Sigmoid colon (tissue), 7 donors: ENCODE measurements at regions of chr17 and their contacts with region 1.

Region 1: DNA sequence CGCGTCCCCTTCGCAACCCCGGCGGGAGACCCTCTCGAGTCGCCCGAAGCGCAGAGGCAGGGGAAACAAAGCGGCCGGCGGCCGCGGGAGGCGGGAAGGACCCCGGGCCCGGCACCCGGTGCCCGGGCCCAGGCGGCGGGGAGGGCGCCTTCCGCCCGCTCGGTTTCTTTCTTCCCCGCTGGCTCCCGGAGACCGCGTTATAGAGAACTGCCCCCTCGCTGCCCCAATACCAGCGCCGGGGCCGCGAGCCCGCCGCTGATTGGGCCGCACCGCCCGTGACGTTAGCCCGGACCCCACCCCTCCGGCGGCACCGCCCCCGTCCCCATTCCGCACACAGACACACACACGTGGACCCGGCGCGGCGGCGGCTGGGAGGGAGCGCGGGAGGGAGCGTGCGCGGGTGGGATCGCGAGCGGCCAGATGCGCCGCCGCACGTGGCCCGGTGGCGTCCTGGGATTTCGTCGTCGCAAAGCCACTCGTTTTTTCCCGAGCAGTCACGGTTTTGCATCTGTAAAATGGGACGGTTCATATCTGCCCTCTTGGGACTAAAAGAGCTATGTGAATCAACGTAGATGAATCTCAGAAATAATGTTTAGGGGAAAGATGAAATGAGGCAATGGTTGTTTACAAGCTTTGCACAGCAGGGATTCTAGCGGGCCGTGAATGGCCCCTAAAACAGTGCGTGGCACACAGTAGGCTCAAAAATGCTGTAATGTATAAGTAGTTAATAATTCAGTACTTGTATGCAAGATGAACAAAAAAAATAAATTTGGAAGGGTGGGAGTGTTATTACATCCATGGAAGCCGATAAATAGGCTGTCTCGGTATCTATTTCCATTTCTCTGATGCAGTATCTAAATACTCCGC is at the start of gene EPOP:
- DNase-seq: peak; percentile 91
- H3K4me3 ChIP-seq: peak within 1 kb of the TSS; percentile 24 to 63 (median 51)
- H3K27ac ChIP-seq: peak within 1 kb of the TSS in 3 of 4 donors; percentile 27 to 59 (median 58)
- H3K4me1 ChIP-seq: peaks cover 0 to 37% (median 34%) of the 10 kb centered on the region in 4 donors
- H3K27me3 ChIP-seq: peaks cover 25 to 63% (median 59%) of the 10 kb centered on the region in 3 donors
- CTCF ChIP-seq: no peak
- EP300 ChIP-seq: no peak
- POLR2A ChIP-seq: no peak
- total RNA-seq, gene EPOP: 0.36 to 2.8 (median 1.3) TPM

Region 2: GRCh38 chr17:38560508-38561318 is 114.3 kb before region 1 on chr17:
- intact Hi-C with region 1: no loop called
- DNase-seq: no peak
- H3K4me3 ChIP-seq: no peak overlapping the region
- H3K27ac ChIP-seq: no peak overlapping the region
- H3K4me1 ChIP-seq: peaks cover 0 to 31% (median 24%) of the 10 kb centered on the region in 4 donors
- H3K27me3 ChIP-seq: peaks cover 23 to 60% (median 41%) of the 10 kb centered on the region in 3 donors
- CTCF ChIP-seq: no peak
- EP300 ChIP-seq: no peak
- POLR2A ChIP-seq: no peak

Region 3: DNA sequence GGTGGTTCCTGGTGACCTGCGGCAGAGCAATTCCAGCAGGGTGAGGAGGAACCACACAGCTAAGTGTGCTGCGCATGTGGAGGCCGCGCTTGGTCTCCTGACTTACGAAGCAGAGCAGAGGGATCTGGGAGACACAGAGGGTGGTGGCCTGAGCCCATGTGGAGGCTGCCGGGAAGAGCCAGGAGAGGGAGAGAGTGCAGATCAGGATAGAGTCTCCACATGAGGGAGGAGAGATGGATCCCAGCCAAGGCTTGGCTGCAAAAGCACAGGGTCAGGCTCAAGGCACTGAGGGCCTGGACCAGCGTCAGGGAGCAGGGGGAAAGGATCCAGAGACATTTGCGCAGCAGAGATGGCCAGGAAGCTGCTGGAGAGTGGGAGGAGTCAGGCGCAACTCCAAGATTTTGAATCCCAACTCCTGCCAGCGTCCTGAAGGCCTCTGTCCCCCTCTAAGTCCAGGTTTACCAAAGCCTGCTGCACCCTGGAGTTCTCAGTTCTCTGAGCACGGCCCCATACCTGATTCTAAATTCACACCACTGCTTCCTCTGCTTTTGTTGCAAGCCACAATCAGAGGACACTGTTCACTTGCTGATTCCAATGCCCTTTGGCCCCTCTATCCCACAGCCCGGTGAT is 18.8 kb after region 1 on chr17:
- intact Hi-C with region 1: loop called (anchors 2 kb)
- DNase-seq: peak; percentile 99
- H3K4me3 ChIP-seq: no peak overlapping the region
- H3K27ac ChIP-seq: peak overlapping the region; percentile 79 to 96 (median 86)
- H3K4me1 ChIP-seq: peaks cover 0 to 25% (median 18%) of the 10 kb centered on the region in 4 donors
- H3K27me3 ChIP-seq: no peaks in the 10 kb centered on the region
- CTCF ChIP-seq: no peak
- EP300 ChIP-seq: peak in 2 of 4 donors; percentile 9 to 82
- POLR2A ChIP-seq: peak in 1 of 2 donors; percentile 8

Region 4: DNA sequence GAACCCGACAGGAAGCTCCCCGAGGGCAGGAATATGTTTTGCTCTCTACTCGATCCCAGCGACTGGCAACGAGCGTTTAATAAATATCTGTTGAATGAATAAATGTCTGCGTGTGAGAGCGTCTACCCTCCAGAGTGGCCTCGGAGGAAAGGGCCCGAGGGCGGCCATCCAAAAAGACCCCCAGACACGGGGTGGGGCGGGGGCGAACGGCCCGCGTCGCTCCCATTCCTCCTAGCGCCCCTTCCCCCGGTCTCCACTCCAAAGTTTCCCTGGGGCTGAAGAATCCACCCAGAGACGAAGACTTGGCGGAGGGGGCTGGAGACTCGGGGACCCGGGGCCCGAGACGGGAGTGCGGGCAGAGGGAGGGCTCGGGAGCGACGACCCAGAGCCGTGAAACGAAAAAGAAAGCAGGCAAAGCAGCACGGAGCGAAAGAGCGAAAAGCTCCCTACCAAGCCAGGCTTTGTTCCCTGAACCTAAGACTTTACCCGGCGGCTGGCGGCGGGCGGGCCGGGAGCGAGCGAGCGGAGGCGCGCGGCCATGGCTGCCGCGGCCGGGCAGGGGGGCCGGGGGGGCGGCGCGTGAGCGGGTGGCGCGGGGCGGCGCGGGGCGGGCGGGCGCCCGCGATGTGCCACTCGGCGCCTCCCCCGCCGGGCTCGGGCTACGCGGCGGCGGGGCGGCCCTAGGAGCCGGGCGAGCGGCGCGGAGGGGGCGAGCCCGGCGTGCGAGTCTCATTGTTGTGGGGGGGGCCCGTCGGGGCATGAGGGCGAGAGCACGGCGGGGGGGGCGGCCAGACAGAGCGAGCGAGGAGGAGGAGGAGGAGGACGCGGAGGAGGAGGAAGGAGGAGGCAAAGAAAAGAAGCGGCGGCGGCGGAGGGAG is 29.9 kb after region 1 on chr17 and contains the start of gene MLLT6:
- intact Hi-C with region 1: loop called (anchors 2 kb)
- DNase-seq: peak; percentile 91
- H3K4me3 ChIP-seq: peak within 1 kb of the TSS; percentile 81 to 98 (median 96)
- H3K27ac ChIP-seq: peak within 1 kb of the TSS; percentile 92 to 99 (median 96)
- H3K4me1 ChIP-seq: peaks cover 0 to 53% (median 33%) of the 10 kb centered on the region in 4 donors
- H3K27me3 ChIP-seq: no peaks in the 10 kb centered on the region
- CTCF ChIP-seq: no peak
- EP300 ChIP-seq: no peak
- POLR2A ChIP-seq: no peak
- total RNA-seq, gene MLLT6: 48.9 to 90.3 (median 69.9) TPM

Region 5: DNA sequence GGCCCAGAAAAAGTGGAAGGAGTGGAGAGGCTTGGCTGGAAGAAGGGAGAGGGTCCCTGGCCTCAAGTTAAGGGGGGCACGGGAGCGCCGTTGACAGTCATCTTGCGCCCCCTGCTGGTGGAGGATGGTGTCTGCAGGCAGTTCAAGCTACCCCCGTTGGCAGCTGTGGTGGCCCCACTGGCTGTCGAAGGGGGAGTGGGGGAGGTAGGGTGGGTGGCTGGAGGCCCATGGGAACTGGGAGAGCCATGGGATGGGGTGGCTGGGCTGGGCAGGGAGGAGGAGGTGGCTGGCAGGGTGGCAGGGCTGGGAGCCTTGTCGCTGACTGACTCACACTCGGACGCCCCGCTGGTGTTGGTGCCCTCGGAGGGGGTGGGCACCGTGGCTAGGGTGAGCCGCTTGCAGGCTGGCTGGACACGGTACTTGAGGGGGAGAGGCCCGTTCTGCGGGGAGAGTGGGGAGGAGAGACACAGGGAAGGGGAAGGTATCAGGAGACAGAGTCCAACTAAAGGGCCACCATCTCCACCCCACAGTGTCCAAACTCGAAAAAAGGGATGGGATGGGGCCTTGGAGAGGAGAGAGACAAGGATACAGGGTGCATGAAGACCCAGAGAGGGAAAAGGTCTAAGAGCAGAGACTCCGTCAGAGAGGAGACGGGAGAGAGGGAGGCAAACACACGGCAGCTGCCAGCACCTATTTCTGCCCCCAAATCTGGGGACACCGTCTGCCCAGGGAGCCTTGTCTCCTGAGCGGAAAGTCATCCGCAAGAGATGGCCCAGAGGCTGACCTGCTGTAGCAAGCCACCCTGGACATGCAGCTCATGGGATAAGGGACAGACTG is 60.4 kb after region 1 on chr17:
- intact Hi-C with region 1: loop called (anchors 1 kb)
- DNase-seq: no peak
- H3K4me3 ChIP-seq: no peak overlapping the region
- H3K27ac ChIP-seq: peak overlapping the region in 1 of 4 donors; percentile 14
- H3K4me1 ChIP-seq: peaks cover 2 to 33% (median 29%) of the 10 kb centered on the region in 4 donors
- H3K27me3 ChIP-seq: no peaks in the 10 kb centered on the region
- CTCF ChIP-seq: peak; percentile 95 to 99 (median 96)
- EP300 ChIP-seq: no peak
- POLR2A ChIP-seq: no peak